SK-N-SH (cell line): ENCODE measurements at regions of chr12 and their contacts with region 1.

Region 1: DNA sequence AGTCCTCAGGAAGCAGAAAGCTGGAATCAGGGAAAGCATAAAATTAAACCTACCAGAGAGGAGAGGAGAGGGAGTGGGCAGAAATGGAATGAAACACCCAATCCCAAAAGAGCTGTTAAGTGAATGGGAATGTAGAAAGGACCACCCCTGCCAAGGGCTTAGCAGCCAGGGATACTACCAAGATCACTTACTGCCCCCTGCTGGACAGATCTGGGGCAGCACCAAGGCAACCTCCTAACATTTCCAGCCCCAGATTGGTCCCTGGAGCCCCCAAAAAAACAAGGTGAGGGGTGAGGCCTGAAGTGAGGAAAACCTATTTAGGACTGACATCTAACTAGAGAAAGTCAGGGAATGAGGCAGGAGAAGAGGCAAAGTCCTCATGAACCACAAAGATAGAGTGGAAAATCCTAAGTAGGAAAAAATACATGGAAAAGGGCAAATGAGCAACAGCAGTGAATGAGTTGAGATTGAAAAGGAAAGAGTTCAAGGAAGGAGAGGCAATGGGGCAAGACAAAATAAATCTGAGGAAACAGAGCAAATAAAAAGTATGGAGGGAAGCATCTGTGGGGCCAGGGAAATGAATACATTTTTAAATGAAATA is 11.2 kb upstream of the FKBP11 start:
- DNase-seq: peak; percentile 88
- H3K4me3 ChIP-seq: peak overlapping the region in 1 of 2 experiments; percentile 31; a peak in 1 of 4 replicates
- H3K27ac ChIP-seq: no peak overlapping the region
- H3K4me1 ChIP-seq: no peaks in the 10 kb centered on the region
- H3K27me3 ChIP-seq: no peaks in the 10 kb centered on the region
- CTCF ChIP-seq: peak; percentile 94
- EP300 ChIP-seq: no peak
- RAD21 ChIP-seq: peak; percentile 73

Region 2: GRCh38 chr12:48903982-48904411 is 32.5 kb before region 1 on chr12:
- CTCF ChIA-PET with region 1: interaction called, 21 read pairs
- POLR2A ChIA-PET with region 1: no interaction called
- DNase-seq: peak; percentile 85
- H3K4me3 ChIP-seq: peak overlapping the region; percentile 53 to 84
- H3K27ac ChIP-seq: no peak overlapping the region
- H3K4me1 ChIP-seq: peaks cover 0 to 5% of the 10 kb centered on the region in 2 experiments; a peak in 1 of 4 replicates
- H3K27me3 ChIP-seq: no peaks in the 10 kb centered on the region
- CTCF ChIP-seq: peak; percentile 68
- EP300 ChIP-seq: no peak
- RAD21 ChIP-seq: peak; percentile 23; the same call in 1 of the 2 replicates

Region 3: GRCh38 chr12:48924617-48925303 is 11.7 kb before region 1 on chr12:
- CTCF ChIA-PET with region 1: interaction called, 29 read pairs
- POLR2A ChIA-PET with region 1: no interaction called
- DNase-seq: peak; percentile 77
- H3K4me3 ChIP-seq: peak overlapping the region; percentile 52 to 57; a peak in 3 of 4 replicates
- H3K27ac ChIP-seq: no peak overlapping the region
- H3K4me1 ChIP-seq: no peaks in the 10 kb centered on the region; a peak in 1 of 4 replicates
- H3K27me3 ChIP-seq: no peaks in the 10 kb centered on the region
- CTCF ChIP-seq: peak; percentile 36
- EP300 ChIP-seq: no peak
- RAD21 ChIP-seq: peak; percentile 44

Region 4: DNA sequence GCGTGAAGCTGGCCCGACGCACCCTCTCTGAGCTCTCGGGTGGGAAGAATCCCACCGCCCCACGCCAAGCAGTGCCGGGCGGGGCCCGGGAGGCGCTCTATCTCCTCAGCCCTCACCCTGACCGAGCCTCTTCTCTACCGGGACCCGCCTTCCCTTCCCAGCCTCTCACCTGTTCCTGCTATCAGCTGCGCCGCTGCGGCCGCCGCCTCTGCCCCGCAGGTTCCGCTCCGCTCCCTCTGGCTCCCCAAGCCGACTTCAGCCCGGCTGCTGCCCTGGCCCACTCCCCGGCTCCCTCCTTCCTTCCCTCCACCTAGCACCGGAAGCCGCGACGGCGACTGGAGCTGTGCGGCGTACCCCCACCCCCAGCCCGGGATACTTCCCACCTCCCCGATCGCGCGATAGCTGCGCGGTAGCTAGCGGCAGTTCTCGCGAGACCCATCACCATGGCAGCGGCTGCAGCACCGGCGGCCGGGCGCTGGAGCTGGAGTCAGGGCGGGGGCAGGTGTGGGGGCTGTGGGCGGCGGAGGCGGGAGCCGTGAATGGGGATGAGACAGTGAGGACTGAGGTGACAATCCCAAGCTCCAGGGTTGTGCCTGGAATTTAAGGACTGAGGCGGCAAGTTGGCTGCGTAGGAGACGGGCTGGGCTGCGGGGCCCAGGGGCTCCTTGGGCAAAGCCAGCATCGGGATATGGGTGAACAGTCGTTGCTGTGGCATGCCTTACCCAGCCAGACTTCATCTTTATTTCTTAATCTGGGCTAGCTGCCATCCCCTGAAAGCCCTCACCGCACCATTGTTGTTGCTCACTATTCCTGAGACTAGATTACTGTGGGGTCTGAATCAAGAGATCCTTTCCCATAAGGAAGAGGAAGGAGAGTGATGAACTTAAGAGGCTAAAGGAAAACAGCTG is 20.9 kb after region 1 on chr12 and contains the start of gene ARF3:
- CTCF ChIA-PET with region 1: interaction called, 21 read pairs
- POLR2A ChIA-PET with region 1: interaction called, 4 read pairs
- DNase-seq: peak; percentile 98
- H3K4me3 ChIP-seq: peak within 1 kb of the TSS; percentile 83 to 96
- H3K27ac ChIP-seq: peak within 1 kb of the TSS; percentile 87 to 90
- H3K4me1 ChIP-seq: peaks cover 7 to 16% of the 10 kb centered on the region in 2 experiments; a peak in 3 of 4 replicates
- H3K27me3 ChIP-seq: no peaks in the 10 kb centered on the region; the same call in 1 of the 2 replicates
- CTCF ChIP-seq: no peak
- EP300 ChIP-seq: no peak
- RAD21 ChIP-seq: no peak
- polyA plus RNA-seq, gene ARF3: 204 and 261 TPM in 2 replicates

Region 5: DNA sequence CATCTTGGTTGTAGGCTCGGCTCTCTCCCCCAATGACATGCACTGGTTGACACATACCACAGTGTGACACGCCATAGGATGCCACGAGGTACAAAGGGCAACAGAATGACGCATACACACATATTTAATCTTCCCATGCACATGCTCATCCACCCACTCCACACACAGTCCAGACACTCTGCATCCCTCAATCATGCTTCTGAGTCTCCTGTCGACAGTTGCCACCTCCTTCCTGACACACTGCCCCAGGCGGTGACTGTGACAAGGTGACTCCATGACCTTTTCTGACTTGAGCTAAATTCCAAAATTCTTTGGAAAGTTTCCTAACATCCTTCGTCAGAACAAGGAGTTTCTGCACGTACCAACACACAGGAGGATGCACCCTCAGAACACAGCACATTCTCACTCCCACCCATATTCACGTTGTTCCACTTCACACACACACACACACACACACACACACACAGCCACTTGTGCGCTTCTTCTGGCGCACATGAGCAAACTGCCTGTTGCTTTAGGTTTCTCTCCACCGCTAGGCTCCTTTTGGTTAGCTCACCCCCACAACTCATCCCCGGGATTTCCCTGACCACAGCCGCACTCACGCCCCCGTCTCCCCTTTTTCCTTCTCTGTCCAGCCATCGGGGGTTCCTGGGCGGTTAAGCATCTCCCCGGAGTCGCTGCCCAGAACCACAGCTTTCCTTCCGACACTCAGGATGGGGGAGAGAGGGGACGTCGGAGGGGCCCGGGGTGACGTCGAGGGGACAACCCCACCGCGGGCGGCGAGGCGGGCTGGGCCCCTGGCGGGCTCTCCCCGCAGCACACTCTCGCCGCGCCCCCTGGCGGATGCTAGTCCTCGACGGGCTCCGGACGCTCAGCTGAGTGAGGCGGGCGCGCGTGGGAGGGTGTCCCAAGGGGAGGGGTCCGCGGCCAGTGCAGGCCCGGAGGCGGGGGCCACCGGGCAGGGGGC is 41.1 kb after region 1 on chr12:
- CTCF ChIA-PET with region 1: interaction called, 11 read pairs
- POLR2A ChIA-PET with region 1: no interaction called
- DNase-seq: peak; percentile 91
- H3K4me3 ChIP-seq: peak overlapping the region in 1 of 2 experiments; percentile 32; a peak in 1 of 4 replicates
- H3K27ac ChIP-seq: no peak overlapping the region
- H3K4me1 ChIP-seq: peaks cover 0 to 26% of the 10 kb centered on the region in 2 experiments; a peak in 1 of 4 replicates
- H3K27me3 ChIP-seq: peaks cover 66% of the 10 kb centered on the region
- CTCF ChIP-seq: peak; percentile 70
- EP300 ChIP-seq: no peak
- RAD21 ChIP-seq: peak; percentile 29; the same call in 1 of the 2 replicates

Region 6: GRCh38 chr12:48988030-48988649 is 51.7 kb after region 1 on chr12:
- CTCF ChIA-PET with region 1: interaction called, 12 read pairs
- POLR2A ChIA-PET with region 1: no interaction called
- DNase-seq: peak; percentile 87
- H3K4me3 ChIP-seq: no peak overlapping the region; a peak in 1 of 4 replicates
- H3K27ac ChIP-seq: no peak overlapping the region
- H3K4me1 ChIP-seq: no peaks in the 10 kb centered on the region
- H3K27me3 ChIP-seq: peaks cover 32% of the 10 kb centered on the region
- CTCF ChIP-seq: peak; percentile 88
- EP300 ChIP-seq: no peak
- RAD21 ChIP-seq: peak; percentile 49

Region 7: GRCh38 chr12:49013428-49013827 is 76.9 kb after region 1 on chr12:
- CTCF ChIA-PET with region 1: no interaction called
- POLR2A ChIA-PET with region 1: no interaction called
- DNase-seq: no peak
- H3K4me3 ChIP-seq: no peak overlapping the region
- H3K27ac ChIP-seq: no peak overlapping the region
- H3K4me1 ChIP-seq: peaks cover 0 to 7% of the 10 kb centered on the region in 2 experiments; a peak in 2 of 4 replicates
- H3K27me3 ChIP-seq: no peaks in the 10 kb centered on the region
- CTCF ChIP-seq: no peak
- EP300 ChIP-seq: no peak
- RAD21 ChIP-seq: no peak